Calu3 (cell line): ENCODE measurements at regions of chr1 and their contacts with region 1.

Region 1: GRCh38 chr1:154186177-154186576 is 5.7 kb downstream of the TPM3 start:
- DNase-seq: peak; percentile 70
- H3K4me3 Mint-ChIP-seq: no peak overlapping the region
- H3K27ac Mint-ChIP-seq: no peak overlapping the region
- H3K4me1 Mint-ChIP-seq: peaks cover 26% of the 10 kb centered on the region
- H3K27me3 Mint-ChIP-seq: peaks cover 6% of the 10 kb centered on the region
- CTCF ChIP-seq: peak; percentile 35

Region 2: DNA sequence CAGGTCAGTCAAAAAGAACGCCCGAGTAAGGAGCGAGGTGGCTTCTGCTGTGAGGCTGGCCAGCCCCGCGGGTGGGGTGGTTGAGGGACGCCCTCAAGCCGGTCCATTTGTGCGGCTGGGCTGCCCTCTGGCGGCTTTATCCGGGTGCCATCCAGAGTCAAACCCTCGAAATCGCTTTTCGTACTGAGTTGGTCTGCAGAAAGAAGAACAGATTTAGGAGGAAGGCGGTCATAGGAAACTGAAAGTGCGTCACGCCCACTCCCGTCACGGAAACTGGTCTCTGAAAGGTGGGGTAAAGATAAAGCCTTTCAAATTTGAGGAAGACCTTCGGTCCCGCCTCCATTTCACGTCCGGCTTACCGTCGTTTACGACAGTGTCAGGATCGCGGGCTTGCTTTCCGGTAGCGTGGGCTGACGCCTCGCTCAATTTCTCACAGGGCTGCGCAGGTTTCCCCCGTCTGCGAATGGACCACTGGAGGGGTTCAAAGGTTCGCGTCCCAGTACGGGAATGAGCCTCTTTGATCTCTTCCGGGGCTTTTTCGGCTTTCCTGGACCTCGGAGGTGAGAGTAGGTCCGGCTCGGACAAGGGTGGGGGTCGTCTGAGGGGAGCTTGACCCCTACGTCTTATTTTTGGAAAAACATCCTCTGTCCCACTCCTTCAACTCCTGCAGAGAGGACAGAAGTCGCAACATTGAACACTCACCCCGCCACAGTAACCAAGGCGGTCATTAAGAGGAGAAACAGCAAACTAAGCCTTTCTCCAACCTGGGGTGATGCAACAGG is 86.2 kb after region 1 on chr1 and contains the start of gene HAX1:
- CTCF ChIA-PET with region 1: no interaction called
- intact Hi-C with region 1: loop called (anchors 2 kb)
- DNase-seq: peak; percentile 91
- H3K4me3 Mint-ChIP-seq: peak within 1 kb of the TSS; percentile 98
- H3K27ac Mint-ChIP-seq: peak within 1 kb of the TSS; percentile 98
- H3K4me1 Mint-ChIP-seq: peaks cover 9% of the 10 kb centered on the region
- H3K27me3 Mint-ChIP-seq: no peaks in the 10 kb centered on the region
- CTCF ChIP-seq: peak; percentile 83
- total RNA-seq, gene HAX1: 112 and 129 TPM in 2 replicates